Common myeloid progenitor, CD34-positive (primary cell): ENCODE measurements at regions of chr2 and their contacts with region 1.

Region 1: DNA sequence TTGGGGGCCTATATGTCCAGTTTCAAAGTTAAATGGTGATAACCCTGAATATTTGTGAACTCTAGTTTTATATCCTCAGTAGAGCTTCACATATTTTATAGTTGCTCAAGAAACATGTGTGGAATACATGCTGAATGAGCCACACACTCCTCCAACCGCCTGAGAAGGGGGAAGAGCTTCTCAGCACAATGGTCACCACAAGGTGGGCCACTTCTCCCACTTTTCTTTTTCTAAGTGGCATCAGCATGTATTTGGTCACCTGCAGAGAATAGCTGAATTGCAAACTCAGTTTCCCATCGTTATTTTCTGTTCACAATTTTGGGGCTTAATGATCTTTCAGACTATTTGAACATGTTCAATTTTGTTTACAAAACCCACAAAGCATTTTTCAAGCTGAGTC is 340.5 kb downstream of the PARD3B start:
- DNase-seq: peak; percentile 45 to 67 (median 60)
- H3K4me3 ChIP-seq: no peak overlapping the region
- H3K27ac ChIP-seq: no peak overlapping the region
- H3K4me1 ChIP-seq: no peaks in the 10 kb centered on the region
- H3K27me3 ChIP-seq: no peaks in the 10 kb centered on the region

Region 2: GRCh38 chr2:204896146-204896545 is 10.4 kb after region 1 on chr2:
- CTCF ChIA-PET with region 1: interaction called, 14 read pairs
- POLR2A ChIA-PET with region 1: no interaction called
- DNase-seq: peak in 2 of 3 donors; percentile 20
- H3K4me3 ChIP-seq: no peak overlapping the region
- H3K27ac ChIP-seq: no peak overlapping the region
- H3K4me1 ChIP-seq: peaks cover 0 to 3% (median 1%) of the 10 kb centered on the region in 4 experiments
- H3K27me3 ChIP-seq: no peaks in the 10 kb centered on the region